Activated naive CD8-positive, alpha-beta T cell treated with anti-CD3 and anti-CD28 coated beads, Interleukin-2, amount 10 ng/mL, durations not matched to agents 7 days and 5 days (primary cell): ENCODE measurements at regions of chr19 and their contacts with region 1.

Region 1: DNA sequence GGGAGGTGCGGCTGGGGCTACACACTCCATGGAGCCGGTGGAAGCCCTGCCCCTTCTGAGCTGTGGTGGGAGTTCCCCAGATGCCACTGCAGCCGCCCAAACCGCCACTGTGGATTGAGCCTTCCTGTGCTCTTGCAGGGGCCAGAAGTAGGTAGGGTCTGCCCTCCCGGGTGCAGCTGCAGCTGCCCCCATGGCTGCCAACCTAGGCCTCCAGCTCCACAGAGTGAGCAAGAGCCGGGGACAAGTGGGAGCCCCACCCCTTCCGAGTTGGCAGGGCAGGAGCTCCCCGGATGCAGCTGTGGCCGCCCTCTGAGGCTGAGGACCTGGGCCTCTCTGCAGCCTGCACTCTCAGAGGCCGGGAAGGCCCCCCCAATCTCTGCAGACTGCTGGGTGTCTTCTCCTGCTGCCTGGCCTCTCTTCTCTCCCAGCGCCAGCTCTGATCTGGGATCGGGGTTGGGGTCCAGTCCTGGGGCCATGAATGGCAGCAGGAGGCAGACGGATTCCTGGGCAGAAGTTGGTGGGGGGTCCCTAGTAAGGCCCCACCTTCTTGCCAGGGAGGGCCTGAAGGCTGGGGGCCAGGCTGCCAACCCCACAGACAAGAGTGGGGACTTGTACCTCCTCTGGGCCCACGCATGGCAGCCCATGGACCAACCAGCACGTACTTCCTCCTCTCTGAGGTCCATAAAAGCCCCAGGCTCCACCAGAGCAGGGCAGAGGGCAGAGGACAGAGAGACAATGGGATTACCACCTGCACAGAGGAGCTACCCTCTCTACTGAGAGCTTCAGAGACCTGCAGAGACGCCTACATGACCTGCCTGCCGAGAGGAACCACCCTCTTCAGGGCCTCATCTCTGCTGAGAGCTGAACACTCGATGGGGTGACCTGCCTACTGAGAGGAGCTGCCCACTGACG is 28.9 kb downstream of the AP2S1 start:
- DNase-seq: peak; percentile 78
- ATAC-seq: peak; percentile 94
- H3K4me3 Mint-ChIP-seq: peak overlapping the region; percentile 65
- H3K27ac Mint-ChIP-seq: peak overlapping the region; percentile 82
- H3K4me1 Mint-ChIP-seq: peaks cover 25% of the 10 kb centered on the region
- H3K27me3 Mint-ChIP-seq: no peaks in the 10 kb centered on the region

Region 2: DNA sequence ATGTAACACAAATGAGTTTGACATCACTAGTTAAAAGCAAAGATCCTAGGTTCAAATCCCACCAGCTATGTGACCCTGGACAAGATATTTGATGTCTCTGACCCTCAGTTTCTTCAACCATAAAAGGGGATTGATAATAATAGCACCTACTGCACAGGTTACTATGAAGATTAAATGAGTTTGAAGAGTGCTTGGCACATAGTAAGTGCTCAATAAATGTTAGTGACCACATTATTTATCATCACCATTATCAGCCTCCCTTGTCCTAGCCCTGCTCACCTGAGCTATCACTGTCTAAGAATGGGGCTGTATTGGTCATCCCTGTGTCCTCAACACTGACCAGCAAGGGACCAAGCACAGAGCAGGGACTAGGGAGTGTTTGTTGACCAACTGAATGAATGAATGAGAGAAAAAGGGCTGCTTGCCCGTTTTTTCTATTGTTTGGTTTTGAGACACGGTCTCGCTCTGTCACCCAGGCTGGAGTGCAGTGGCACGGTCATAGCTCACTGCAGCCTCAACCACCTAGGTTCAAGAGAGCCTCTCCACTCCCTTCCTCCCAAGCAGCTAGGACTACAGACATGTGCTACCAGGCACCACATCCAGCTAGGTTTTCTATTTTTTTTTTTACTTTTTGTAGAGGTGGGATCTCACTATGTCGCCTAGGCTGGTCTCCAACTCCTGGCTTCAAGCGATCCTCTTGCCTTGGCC is 134.2 kb before region 1 on chr19:
- POLR2A ChIA-PET with region 1: no interaction called
- DNase-seq: no peak
- ATAC-seq: no peak
- H3K4me3 Mint-ChIP-seq: no peak overlapping the region
- H3K27ac Mint-ChIP-seq: no peak overlapping the region
- H3K4me1 Mint-ChIP-seq: peaks cover 1% of the 10 kb centered on the region
- H3K27me3 Mint-ChIP-seq: no peaks in the 10 kb centered on the region

Region 3: DNA sequence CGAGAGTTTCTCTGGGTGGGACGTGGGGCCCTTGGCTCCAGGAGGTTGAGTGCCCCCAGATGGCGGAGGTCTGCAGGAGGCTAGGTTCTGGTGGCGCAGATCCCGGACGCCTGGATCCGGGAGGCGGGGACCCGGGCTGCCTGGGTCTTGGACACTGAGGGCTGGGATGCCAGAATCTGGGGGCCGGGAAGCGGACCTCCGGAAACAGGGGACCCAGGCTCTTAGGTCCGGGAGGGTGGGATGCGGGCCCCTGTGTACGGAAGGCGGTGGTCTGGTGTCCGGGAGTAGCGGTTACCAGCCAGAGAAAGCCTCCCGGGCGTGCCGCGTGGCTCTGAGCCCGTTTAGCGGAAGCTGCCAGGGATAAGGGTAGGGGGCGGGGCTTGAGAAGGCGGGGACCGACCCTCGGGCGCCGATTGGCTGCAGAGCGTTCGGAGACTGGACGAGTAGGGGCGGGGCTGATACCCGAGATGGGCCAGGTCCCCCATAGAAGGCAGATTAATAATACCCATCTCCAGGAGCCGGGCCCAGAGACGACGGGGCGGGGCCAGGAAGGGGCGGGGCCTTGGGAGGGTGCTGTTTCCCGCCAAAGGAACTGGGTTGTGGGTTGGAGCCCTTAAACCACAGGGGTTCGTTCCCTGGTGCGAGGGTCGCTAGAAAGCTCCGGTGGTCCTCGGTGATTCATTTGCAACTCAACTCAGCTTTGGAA is 33.3 kb before region 1 on chr19 and contains the start of gene SLC1A5:
- POLR2A ChIA-PET with region 1: interaction called, 160 read pairs
- DNase-seq: peak; percentile 98
- ATAC-seq: peak; percentile 68
- H3K4me3 Mint-ChIP-seq: peak within 1 kb of the TSS; percentile 91
- H3K27ac Mint-ChIP-seq: peak within 1 kb of the TSS; percentile 92
- H3K4me1 Mint-ChIP-seq: peaks cover 56% of the 10 kb centered on the region
- H3K27me3 Mint-ChIP-seq: peaks cover 2% of the 10 kb centered on the region
- total RNA-seq, gene SLC1A5: 121 to 127 TPM

Region 4: DNA sequence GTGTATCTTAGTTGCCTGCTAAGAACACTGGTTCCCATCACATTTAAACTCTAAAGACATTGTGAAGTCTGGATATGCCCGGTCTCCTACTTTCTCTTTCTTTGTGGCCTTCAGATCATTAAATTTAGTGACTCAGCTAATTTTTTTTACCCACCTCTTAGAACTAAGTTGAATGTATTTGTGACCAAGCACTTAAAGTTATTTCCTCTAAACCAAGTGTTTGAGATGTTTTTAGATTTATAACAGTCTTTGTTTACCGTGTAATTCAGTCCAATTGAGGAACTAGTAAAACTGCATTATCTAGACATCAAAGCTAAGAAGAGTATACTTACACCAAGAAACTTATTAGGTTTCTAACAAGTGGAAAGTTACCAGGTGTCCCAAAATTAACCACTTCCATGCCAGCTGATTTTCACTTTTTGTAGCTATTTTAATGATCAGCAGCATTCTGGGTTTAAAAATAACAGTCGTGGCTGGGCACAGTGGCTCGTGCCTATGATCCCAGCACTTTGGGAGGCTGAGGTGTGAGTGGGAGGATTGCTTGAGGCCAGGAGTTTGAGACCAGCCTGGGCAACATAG is 92.2 kb after region 1 on chr19:
- POLR2A ChIA-PET with region 1: no interaction called
- DNase-seq: no peak
- ATAC-seq: no peak
- H3K4me3 Mint-ChIP-seq: no peak overlapping the region
- H3K27ac Mint-ChIP-seq: no peak overlapping the region
- H3K4me1 Mint-ChIP-seq: peaks cover 33% of the 10 kb centered on the region
- H3K27me3 Mint-ChIP-seq: no peaks in the 10 kb centered on the region

Region 5: DNA sequence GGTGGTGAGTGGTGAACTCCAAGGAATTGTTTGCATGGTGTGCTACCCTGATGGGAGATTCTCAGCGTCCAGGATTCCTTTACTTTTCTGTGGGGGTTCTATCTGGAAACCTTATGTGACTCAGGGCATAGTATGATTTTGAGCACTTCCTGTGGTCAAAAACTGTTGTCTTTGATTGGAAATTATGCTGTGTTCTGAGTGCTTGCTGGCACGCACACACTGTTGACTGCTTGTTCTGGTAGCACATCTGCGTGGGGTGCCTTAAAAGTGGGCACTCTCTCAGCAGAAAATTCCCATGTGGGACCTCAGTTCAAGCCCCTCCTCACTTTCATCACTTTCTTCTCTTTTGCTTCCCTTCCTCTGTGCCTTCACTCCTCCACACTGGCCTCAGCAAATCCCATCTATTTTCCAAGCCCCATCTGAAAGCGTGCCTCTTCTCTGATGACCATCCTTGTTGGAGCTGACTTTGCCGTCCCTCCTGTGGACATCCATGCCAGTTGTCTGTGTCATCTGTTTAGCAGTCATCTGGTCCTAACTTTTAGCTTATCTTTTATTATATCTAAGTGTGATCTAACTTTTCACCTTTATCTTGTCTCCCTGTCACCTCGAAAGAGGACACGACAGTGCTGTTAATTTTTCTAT is 141.5 kb after region 1 on chr19:
- POLR2A ChIA-PET with region 1: no interaction called
- DNase-seq: no peak
- ATAC-seq: no peak
- H3K4me3 Mint-ChIP-seq: peak overlapping the region; percentile 61
- H3K27ac Mint-ChIP-seq: peak overlapping the region; percentile 47
- H3K4me1 Mint-ChIP-seq: peaks cover 28% of the 10 kb centered on the region
- H3K27me3 Mint-ChIP-seq: no peaks in the 10 kb centered on the region